CD8-positive, alpha-beta T cell (primary cell): ENCODE measurements at regions of chr21 and their contacts with region 1.

Region 1: GRCh38 chr21:44338971-44339910 is at the start of gene CFAP410:
- DNase-seq: peak; percentile 89 to 98 (median 95)
- ATAC-seq: peak; percentile 84
- H3K4me3 ChIP-seq: peak within 1 kb of the TSS; percentile 73 to 76
- H3K4me3 Mint-ChIP-seq: peak within 1 kb of the TSS; percentile 94
- H3K27ac ChIP-seq: peak within 1 kb of the TSS; percentile 92 to 96
- H3K27ac Mint-ChIP-seq: peak within 1 kb of the TSS; percentile 99
- H3K4me1 ChIP-seq: peaks cover 17% of the 10 kb centered on the region
- H3K4me1 Mint-ChIP-seq: peaks cover 32% of the 10 kb centered on the region
- H3K27me3 ChIP-seq: no peaks in the 10 kb centered on the region
- H3K27me3 Mint-ChIP-seq: no peaks in the 10 kb centered on the region
- CTCF ChIP-seq: no peak
- total RNA-seq, gene CFAP410: 69.7 to 70.5 TPM

Region 2: DNA sequence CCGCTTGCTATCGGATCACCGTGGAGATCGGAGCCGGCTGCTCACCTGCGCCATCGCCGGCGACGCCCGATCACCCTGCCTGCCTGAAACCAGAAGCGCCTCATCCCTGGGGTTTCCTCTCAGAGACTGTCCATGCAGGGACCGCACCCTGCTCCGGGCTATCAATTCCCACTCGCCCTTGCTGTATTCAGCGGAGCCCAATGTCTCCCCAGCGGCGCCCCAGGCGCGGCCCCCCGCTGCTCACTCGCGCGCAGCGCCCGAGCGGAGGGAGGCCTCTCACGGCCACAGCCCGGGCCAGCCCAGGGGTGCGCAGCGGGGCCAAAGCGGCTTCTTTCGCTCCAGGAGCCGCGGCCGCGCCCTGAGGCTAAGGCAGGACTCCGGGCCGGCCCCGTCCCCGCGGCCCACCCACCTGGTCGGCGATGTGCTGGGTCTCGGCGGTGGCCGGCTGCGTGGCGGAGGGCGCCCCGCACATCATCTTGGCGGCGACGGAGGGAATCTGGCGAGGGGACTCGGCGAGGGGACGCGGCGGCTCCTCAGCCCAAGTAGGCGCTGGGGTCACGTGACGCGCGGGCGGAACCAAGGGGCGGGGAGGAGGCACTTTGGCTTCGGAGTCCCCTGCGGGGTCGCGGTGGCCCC is 563.3 kb before region 1 on chr21 and contains the start of gene CSTB:
- CTCF ChIA-PET with region 1: no interaction called
- POLR2A ChIA-PET with region 1: no interaction called
- intact Hi-C with region 1: loop called in 1 of 2 experiments (anchors 2 kb)
- DNase-seq: peak; percentile 65 to 92 (median 83)
- ATAC-seq: peak; percentile 79
- H3K4me3 ChIP-seq: peak within 1 kb of the TSS; percentile 63 to 91
- H3K4me3 Mint-ChIP-seq: peak within 1 kb of the TSS; percentile 91
- H3K27ac ChIP-seq: peak within 1 kb of the TSS; percentile 31 to 70
- H3K27ac Mint-ChIP-seq: peak within 1 kb of the TSS; percentile 83
- H3K4me1 ChIP-seq: peaks cover 19% of the 10 kb centered on the region
- H3K4me1 Mint-ChIP-seq: peaks cover 32% of the 10 kb centered on the region
- H3K27me3 ChIP-seq: no peaks in the 10 kb centered on the region
- H3K27me3 Mint-ChIP-seq: no peaks in the 10 kb centered on the region
- CTCF ChIP-seq: no peak
- total RNA-seq, gene CSTB: 7.4 to 7.7 TPM

Region 3: GRCh38 chr21:44011980-44012527 is 327.2 kb before region 1 on chr21 and contains the start of gene TRAPPC10:
- CTCF ChIA-PET with region 1: no interaction called
- POLR2A ChIA-PET with region 1: no interaction called
- intact Hi-C with region 1: loop called in 1 of 2 experiments (anchors 5 kb)
- DNase-seq: peak; percentile 48 to 91 (median 75)
- ATAC-seq: peak; percentile 53
- H3K4me3 ChIP-seq: peak within 1 kb of the TSS; percentile 63 to 79
- H3K4me3 Mint-ChIP-seq: peak within 1 kb of the TSS; percentile 87
- H3K27ac ChIP-seq: peak within 1 kb of the TSS; percentile 58 to 83
- H3K27ac Mint-ChIP-seq: peak within 1 kb of the TSS; percentile 94
- H3K4me1 ChIP-seq: peaks cover 40% of the 10 kb centered on the region
- H3K4me1 Mint-ChIP-seq: peaks cover 42% of the 10 kb centered on the region
- H3K27me3 ChIP-seq: no peaks in the 10 kb centered on the region
- H3K27me3 Mint-ChIP-seq: no peaks in the 10 kb centered on the region
- CTCF ChIP-seq: no peak
- total RNA-seq, gene TRAPPC10: 128 to 130 TPM

Region 4: GRCh38 chr21:44299458-44300261 is 39.6 kb before region 1 on chr21 and contains the start of gene PFKL:
- CTCF ChIA-PET with region 1: interaction called, 5 read pairs
- POLR2A ChIA-PET with region 1: interaction called, 3 read pairs
- intact Hi-C with region 1: loop called (anchors 1 kb)
- DNase-seq: peak in 8 of 9 experiments; percentile 38 to 74 (median 56)
- ATAC-seq: peak; percentile 54
- H3K4me3 ChIP-seq: peak within 1 kb of the TSS; percentile 57 to 76
- H3K4me3 Mint-ChIP-seq: peak within 1 kb of the TSS; percentile 89
- H3K27ac ChIP-seq: peak within 1 kb of the TSS; percentile 48 to 55
- H3K27ac Mint-ChIP-seq: peak within 1 kb of the TSS; percentile 95
- H3K4me1 ChIP-seq: peaks cover 66% of the 10 kb centered on the region
- H3K4me1 Mint-ChIP-seq: peaks cover 55% of the 10 kb centered on the region
- H3K27me3 ChIP-seq: no peaks in the 10 kb centered on the region
- H3K27me3 Mint-ChIP-seq: no peaks in the 10 kb centered on the region
- CTCF ChIP-seq: no peak
- total RNA-seq, gene PFKL: 85.1 to 87.8 TPM

Region 5: DNA sequence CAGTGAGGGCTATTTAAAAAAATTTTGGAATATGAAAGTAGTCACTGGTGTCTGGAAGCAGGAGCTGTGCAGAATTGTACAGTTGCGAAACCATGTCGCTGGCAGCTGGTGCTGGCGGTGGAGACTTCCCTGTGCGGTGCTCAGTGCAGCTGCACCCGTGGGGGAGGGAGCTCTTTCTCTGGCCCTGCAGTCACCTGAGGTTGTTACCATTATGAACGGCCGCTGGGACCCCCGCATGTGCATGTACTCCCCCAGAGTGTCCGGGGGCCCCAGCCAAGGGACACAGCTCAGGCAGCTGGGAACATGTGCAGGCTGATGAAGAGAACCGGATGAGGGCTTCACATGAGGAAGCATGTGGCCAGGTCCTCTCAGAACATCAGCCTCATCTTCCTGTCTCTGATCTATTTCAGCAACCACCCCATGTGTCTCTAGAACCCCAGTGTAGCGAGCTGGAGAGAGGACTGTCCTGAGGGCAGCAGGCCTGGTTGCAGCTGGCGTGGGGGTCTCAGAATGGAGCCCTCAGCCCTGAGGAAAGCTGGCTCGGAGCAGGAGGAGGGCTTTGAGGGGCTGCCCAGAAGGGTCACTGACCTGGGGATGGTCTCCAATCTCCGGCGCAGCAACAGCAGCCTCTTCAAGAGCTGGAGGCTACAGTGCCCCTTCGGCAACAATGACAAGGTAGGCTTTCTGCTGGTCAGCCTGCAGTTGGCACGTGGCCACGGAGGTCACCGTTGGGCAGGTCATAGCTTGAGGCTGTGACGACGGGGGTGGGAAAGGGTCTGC is 14.1 kb after region 1 on chr21 and contains the start of gene TRPM2:
- CTCF ChIA-PET with region 1: interaction called, 3 read pairs
- POLR2A ChIA-PET with region 1: interaction called, 12 read pairs
- intact Hi-C with region 1: no loop called
- DNase-seq: peak in 7 of 9 experiments; percentile 13 to 70 (median 37)
- ATAC-seq: peak; percentile 80
- H3K4me3 ChIP-seq: peak within 1 kb of the TSS; percentile 11 to 30
- H3K4me3 Mint-ChIP-seq: peak within 1 kb of the TSS; percentile 83
- H3K27ac ChIP-seq: peak within 1 kb of the TSS in 1 of 2 experiments; percentile 34
- H3K27ac Mint-ChIP-seq: peak within 1 kb of the TSS; percentile 67
- H3K4me1 ChIP-seq: peaks cover 49% of the 10 kb centered on the region
- H3K4me1 Mint-ChIP-seq: peaks cover 42% of the 10 kb centered on the region
- H3K27me3 ChIP-seq: peaks cover 0 to 4% of the 10 kb centered on the region in 2 experiments
- H3K27me3 Mint-ChIP-seq: peaks cover 2% of the 10 kb centered on the region
- CTCF ChIP-seq: no peak
- total RNA-seq, gene TRPM2: 1.2 to 2.0 TPM

Region 6: DNA sequence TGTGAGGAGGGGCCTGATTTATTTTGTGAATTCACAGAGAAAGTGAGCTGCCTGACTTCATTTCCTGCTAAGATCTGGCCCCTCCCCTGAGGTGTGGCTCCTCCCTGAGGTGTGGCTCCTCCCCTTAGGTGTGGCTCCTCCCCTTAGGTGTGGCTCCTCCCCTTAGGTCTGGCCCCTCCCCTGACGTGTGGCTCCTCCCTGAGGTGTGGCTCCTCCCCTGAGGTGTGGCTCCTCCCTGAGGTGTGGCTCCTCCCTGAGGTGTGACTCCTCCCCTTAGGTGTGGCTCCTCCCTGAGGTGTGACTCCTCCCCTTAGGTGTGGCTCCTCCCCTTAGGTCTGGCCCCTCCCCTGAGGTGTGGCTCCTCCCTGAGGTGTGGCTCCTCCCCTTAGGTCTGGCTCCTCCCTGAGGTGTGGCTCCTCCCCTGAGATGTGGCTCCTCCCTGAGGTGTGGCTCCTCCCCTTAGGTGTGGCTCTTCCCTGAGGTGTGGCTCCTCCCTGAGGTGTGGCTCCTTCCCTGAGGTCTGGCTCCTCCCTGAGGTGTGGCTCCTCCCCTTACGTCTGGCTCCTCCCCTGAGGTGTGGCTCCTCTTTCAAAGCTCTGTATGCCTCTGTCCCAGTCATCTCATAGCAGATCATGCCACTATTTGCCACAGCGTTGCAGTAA is 89.2 kb after region 1 on chr21:
- CTCF ChIA-PET with region 1: no interaction called
- POLR2A ChIA-PET with region 1: no interaction called
- intact Hi-C with region 1: loop called (anchors 1 to 2 kb)
- DNase-seq: peak in 7 of 9 experiments; percentile 29 to 71 (median 44)
- ATAC-seq: peak; percentile 90
- H3K4me3 ChIP-seq: no peak overlapping the region
- H3K4me3 Mint-ChIP-seq: no peak overlapping the region
- H3K27ac ChIP-seq: no peak overlapping the region
- H3K27ac Mint-ChIP-seq: no peak overlapping the region
- H3K4me1 ChIP-seq: no peaks in the 10 kb centered on the region
- H3K4me1 Mint-ChIP-seq: no peaks in the 10 kb centered on the region
- H3K27me3 ChIP-seq: peaks cover 0 to 2% of the 10 kb centered on the region in 2 experiments
- H3K27me3 Mint-ChIP-seq: no peaks in the 10 kb centered on the region
- CTCF ChIP-seq: no peak

Region 7: DNA sequence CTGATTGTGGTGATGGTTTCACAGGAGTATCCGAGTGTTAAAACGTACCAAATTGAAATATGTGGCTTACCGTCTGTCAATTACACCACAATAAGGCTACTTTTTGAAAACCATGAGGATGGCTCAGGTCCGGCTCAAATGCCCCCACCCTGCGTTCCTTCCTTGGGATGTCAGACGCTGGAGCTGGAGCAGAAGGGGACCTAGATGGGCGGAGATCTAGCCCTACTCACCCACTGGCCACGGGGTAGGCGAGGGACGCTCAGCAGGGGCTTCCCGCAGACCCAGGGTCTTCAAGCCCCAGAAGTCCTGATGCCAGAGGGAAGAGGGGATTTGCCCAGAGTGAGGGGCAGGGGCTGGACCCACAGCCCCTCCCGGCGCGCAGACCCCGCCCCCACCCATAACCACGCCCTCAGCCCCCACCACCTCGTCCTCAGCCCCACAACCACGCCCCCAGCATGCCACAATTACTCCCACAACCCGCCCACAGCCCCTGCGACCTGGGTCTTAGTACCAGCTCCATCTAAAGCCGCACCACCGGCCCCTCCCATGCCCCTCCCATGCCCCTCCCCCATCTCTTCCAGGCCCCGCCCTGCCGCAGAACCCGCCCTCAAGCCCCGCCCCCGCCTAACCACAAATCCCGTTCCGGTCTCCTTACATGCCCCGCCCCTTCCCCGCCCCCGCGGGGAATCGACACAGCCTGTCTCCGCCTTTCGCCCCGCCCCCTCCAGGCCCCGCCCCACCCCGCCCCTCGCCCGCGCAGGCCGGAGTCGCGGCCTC is 115.7 kb after region 1 on chr21 and contains the start of gene LRRC3:
- CTCF ChIA-PET with region 1: no interaction called
- POLR2A ChIA-PET with region 1: interaction called, 3 read pairs
- intact Hi-C with region 1: loop called (anchors 1 to 2 kb)
- DNase-seq: peak; percentile 58 to 89 (median 76)
- ATAC-seq: peak; percentile 86
- H3K4me3 ChIP-seq: peak within 1 kb of the TSS; percentile 50 to 69
- H3K4me3 Mint-ChIP-seq: peak within 1 kb of the TSS; percentile 80
- H3K27ac ChIP-seq: no peak within 1 kb of the TSS
- H3K27ac Mint-ChIP-seq: no peak within 1 kb of the TSS
- H3K4me1 ChIP-seq: peaks cover 9% of the 10 kb centered on the region
- H3K4me1 Mint-ChIP-seq: peaks cover 5% of the 10 kb centered on the region
- H3K27me3 ChIP-seq: no peaks in the 10 kb centered on the region
- H3K27me3 Mint-ChIP-seq: peaks cover 5% of the 10 kb centered on the region
- CTCF ChIP-seq: no peak
- total RNA-seq, gene LRRC3: 0.39 to 0.68 TPM